ENCODE measurements at regions of chr6 and their contacts with region 1.

Region 1: GRCh38 chr6:26285143-26286134 is 79.6 kb upstream of the BTN3A2 start:
- DNase-seq: peak; percentile 98
- ATAC-seq: peak; percentile 80
- H3K4me3 Mint-ChIP-seq: peak overlapping the region; percentile 88
- H3K27ac Mint-ChIP-seq: peak overlapping the region; percentile 99
- H3K4me1 Mint-ChIP-seq: peaks cover 14% of the 10 kb centered on the region
- H3K27me3 Mint-ChIP-seq: peaks cover 3% of the 10 kb centered on the region

Region 2: DNA sequence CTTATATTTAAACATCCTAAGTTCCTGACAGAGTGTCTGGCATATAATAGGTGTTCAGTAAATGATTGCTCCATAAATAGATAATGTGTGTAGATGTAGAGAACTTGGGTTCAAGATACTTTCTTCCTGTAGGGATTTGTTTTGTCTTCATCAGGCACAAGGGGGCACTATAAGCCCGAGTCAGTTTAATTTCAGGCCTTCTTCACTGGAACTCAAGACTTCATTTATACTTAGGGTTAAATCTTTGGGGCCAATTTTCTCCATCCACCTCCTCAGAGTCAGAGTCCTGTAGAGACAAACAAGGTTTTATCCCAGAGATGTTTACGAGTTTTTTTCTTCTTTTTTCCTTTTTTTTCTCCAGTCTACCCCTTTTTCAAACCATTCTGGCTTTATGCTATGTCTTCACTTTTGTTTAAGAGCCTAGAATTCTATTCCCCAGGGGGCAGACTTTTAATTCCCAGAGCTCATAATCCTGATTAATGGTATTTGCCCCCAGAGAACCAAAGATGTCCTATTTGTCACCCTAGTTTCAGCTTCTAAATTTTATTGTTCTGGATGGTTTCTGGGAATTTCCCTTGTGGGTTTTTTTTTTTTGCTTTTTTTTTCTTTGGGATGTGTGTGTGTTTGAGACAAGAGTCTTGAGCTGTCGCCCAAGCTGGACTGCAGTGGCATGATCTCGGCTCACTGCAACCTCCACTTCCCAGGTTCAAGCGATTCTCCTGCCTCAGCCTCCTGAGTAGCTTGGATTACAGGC is 109.8 kb before region 1 on chr6:
- CTCF ChIA-PET with region 1: no interaction called
- POLR2A ChIA-PET with region 1: no interaction called
- intact Hi-C with region 1: loop called in 1 of 2 experiments (anchors 1 kb)
- DNase-seq: peak; percentile 69
- ATAC-seq: peak; percentile 14
- H3K4me3 Mint-ChIP-seq: peak overlapping the region; percentile 30
- H3K27ac Mint-ChIP-seq: peak overlapping the region; percentile 80
- H3K4me1 Mint-ChIP-seq: peaks cover 33% of the 10 kb centered on the region
- H3K27me3 Mint-ChIP-seq: no peaks in the 10 kb centered on the region

Region 3: GRCh38 chr6:26216356-26216885 is 69.0 kb before region 1 on chr6:
- CTCF ChIA-PET with region 1: interaction called, 4 read pairs
- POLR2A ChIA-PET with region 1: interaction called, 19 read pairs
- intact Hi-C with region 1: loop called in 1 of 2 experiments (anchors 1 kb)
- DNase-seq: peak; percentile 88
- ATAC-seq: peak; percentile 76
- H3K4me3 Mint-ChIP-seq: no peak overlapping the region
- H3K27ac Mint-ChIP-seq: no peak overlapping the region
- H3K4me1 Mint-ChIP-seq: peaks cover 2% of the 10 kb centered on the region
- H3K27me3 Mint-ChIP-seq: no peaks in the 10 kb centered on the region

Region 4: GRCh38 chr6:26240154-26241032 is 45.0 kb before region 1 on chr6:
- CTCF ChIA-PET with region 1: no interaction called
- POLR2A ChIA-PET with region 1: interaction called, 5 read pairs
- intact Hi-C with region 1: loop called (anchors 1 kb)
- DNase-seq: peak; percentile 85
- ATAC-seq: peak; percentile 83
- H3K4me3 Mint-ChIP-seq: peak overlapping the region; percentile 83
- H3K27ac Mint-ChIP-seq: peak overlapping the region; percentile 98
- H3K4me1 Mint-ChIP-seq: peaks cover 26% of the 10 kb centered on the region
- H3K27me3 Mint-ChIP-seq: no peaks in the 10 kb centered on the region

Region 5: DNA sequence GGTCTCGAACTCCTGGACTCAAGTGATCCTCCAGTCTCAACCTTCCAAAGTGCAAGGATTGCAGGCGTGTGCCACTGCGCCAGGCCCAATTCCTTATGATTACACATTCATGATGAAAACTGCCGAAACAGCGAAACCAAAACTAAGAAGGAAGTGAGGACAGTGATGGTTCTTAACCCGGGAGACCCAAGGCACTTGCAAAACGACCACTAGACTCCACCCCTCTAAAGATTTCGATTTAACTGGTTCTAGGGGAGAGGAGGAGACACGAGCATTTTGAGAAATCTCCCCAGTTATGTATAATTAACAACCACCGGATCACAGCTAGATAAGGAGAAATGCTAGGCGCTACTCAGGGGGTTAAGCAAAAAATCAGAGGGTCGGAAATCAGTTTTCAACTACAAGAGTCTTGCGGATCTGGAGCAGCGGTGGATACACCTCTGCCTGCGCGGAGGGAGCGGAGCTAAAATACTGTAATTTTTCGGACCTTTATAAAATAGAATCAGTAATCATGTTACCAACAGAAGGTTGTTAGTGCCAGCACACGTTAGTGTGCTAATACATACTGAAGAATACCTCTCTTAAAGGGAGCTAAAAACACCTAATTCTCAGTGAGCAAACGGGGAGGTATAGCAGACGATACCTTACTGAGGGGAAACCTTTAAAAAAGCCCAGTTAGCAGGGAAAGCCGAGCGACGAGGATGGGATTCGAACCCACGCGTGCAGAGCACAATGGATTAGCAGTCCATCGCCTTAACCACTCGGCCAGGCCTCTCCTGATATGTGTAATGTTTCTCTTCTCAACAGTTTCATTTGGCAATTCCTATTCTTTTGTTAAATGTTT is 19.6 kb after region 1 on chr6:
- CTCF ChIA-PET with region 1: interaction called, 5 read pairs
- POLR2A ChIA-PET with region 1: interaction called, 3 read pairs
- intact Hi-C with region 1: loop called (anchors 1 to 2 kb)
- DNase-seq: peak; percentile 85
- ATAC-seq: peak; percentile 63
- H3K4me3 Mint-ChIP-seq: peak overlapping the region; percentile 69
- H3K27ac Mint-ChIP-seq: peak overlapping the region; percentile 86
- H3K4me1 Mint-ChIP-seq: peaks cover 50% of the 10 kb centered on the region
- H3K27me3 Mint-ChIP-seq: no peaks in the 10 kb centered on the region

Region 6: GRCh38 chr6:26537846-26538571 is 252.6 kb after region 1 on chr6 and contains the start of gene HMGN4:
- CTCF ChIA-PET with region 1: no interaction called
- POLR2A ChIA-PET with region 1: no interaction called
- intact Hi-C with region 1: loop called in 1 of 2 experiments (anchors 1 kb)
- DNase-seq: peak; percentile 89
- ATAC-seq: peak; percentile 63
- H3K4me3 Mint-ChIP-seq: peak within 1 kb of the TSS; percentile 89
- H3K27ac Mint-ChIP-seq: peak within 1 kb of the TSS; percentile 99
- H3K4me1 Mint-ChIP-seq: peaks cover 57% of the 10 kb centered on the region
- H3K27me3 Mint-ChIP-seq: no peaks in the 10 kb centered on the region
- total RNA-seq, gene HMGN4: 63.6 to 86.4 TPM

Measured in activated CD4-positive, alpha-beta T cell treated with anti-CD3 and anti-CD28 coated beads for 36 hours (primary cell).